ENCODE measurements at regions of chr19 and their contacts with region 1.

Region 1: GRCh38 chr19:2385053-2385721 is 25.1 kb downstream of the TMPRSS9 start:
- DNase-seq: no peak
- ATAC-seq: peak; percentile 56 to 90 (median 82)
- H3K4me3 ChIP-seq: no peak overlapping the region
- H3K27ac ChIP-seq: no peak overlapping the region
- H3K4me1 ChIP-seq: no peaks in the 10 kb centered on the region
- H3K27me3 ChIP-seq: no peaks in the 10 kb centered on the region
- CTCF ChIP-seq: no peak
- POLR2A ChIP-seq: no peak

Region 2: DNA sequence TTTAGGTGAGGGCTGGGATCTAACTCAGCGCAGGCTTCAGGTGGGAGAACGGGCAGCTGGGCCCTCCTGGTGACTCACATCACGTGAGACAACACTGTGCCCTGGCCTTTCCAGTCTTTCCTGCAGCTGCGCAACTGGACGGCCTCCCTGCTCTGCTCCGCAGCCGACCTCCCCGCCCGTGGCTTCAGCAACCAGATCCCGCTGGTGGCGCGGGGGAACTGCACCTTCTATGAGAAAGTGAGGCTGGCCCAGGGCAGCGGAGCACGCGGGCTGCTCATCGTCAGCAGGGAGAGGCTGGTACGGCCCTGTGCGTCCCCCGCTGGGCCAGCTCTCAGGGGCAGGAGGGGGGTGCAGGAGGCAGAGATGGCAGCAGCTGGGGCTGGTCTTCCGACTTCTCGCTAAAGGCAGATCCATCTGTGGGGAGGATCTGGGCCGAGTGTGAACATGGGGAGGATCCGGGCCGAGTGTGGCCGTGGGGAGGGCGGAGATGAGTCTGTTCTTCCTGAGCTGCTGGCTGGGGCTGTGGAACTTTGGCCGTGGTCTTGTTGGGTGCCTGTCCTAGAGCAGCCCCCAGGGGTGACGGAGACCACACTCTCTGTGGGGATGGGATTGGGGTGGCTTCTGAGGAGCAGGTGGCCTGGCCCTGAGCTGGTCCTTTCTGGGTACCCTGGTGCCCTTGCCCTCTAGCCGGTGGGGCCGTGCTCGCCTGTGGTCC is 47.7 kb before region 1 on chr19:
- intact Hi-C with region 1: loop called in 1 of 2 experiments (anchors 10 kb)
- DNase-seq: no peak
- ATAC-seq: no peak
- H3K4me3 ChIP-seq: no peak overlapping the region
- H3K27ac ChIP-seq: no peak overlapping the region
- H3K4me1 ChIP-seq: no peaks in the 10 kb centered on the region
- H3K27me3 ChIP-seq: no peaks in the 10 kb centered on the region
- CTCF ChIP-seq: no peak
- POLR2A ChIP-seq: no peak